ENCODE measurements at regions of chr2 and their contacts with region 1.

Region 1: DNA sequence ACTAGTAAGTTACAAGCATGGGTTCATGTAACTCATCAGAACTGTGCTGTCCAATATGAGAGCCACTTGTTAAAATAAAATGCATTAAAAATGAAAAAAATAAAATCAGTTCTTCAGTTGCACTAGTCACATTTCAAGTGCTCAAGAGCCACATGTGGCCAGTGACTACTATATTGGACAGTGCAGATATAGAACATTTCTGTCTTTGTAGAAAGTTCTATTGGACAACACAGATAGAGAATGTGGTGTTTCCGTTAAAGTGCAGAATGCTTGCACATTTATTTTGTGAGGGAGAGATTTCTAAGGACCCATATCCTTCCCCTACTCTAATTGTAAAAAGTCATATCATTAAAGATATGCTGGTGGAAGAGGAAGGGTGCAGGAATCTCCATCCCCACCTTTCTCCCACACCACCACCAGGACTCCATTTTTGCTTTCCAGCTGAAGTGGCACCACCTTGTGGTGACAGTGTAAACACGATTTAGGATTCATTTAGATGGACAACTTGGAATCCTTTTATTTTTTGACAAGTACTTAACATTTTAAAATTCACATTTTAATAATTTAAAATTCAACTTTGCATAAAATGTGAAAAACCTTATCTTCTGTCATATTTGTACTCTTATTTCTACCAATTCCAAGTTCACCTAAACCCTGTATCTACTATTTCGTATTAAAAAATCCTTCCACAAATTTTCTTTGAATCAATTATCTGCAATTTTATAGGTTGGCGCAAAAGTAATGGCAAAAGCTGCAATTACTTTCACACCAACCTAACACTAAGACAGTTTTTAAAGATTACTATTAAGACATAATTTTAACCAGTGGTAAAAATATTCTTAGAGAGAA is 9.4 kb upstream of the CD302 start:
- DNase-seq: peak in 1 of 6 donors; percentile 45
- ATAC-seq: peak in 3 of 4 donors; percentile 76 to 85 (median 84)
- H3K4me3 ChIP-seq: no peak overlapping the region
- H3K27ac ChIP-seq: no peak overlapping the region
- H3K4me1 ChIP-seq: peaks cover 0 to 7% (median 0%) of the 10 kb centered on the region in 3 donors
- H3K27me3 ChIP-seq: no peaks in the 10 kb centered on the region
- CTCF ChIP-seq: peak; percentile 38 to 67 (median 60)

Region 2: DNA sequence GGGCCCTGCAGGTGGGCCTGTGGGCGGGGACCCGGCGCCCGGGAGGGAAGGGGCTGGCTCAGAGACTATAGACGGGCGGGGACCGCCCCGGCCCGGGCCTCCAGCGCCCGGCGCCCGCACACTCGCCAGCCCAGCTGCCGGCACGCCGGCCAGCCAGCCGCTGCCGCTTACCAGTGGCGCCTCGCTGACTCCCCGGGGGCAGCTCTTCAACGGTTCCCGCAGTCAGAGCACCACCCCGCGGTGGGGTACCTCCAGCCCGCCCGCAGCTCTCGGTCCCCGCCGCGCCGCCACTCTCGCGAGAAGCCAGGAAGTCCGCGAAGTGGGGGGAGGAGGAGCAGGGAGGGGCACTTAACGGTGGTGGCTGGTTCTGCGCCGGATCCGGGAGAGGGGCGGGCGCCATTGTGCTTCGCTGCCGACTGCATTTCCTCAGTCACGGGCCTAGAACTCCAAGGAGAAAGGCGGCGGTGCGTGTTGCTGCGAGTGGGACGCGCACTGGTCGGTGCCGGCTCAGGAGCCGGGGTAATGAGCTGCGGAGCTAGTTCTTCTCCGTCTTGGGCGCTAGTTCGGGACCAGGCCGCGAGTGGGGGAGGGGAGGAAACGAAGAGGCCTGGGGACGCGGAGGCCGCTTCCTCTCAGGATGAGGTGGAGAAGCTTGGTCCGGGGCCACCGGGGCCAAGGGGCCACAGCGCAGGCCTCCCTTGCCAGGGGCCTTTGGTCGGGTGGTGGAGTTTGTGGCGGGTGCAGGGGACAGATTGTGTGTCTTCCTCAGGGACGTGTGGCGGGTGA is 95.1 kb before region 1 on chr2 and contains the start of gene MARCHF7:
- intact Hi-C with region 1: loop called in 1 of 3 experiments (anchors 10 kb)
- DNase-seq: peak; percentile 96 to 99 (median 98)
- ATAC-seq: peak; percentile 95 to 98 (median 98)
- H3K4me3 ChIP-seq: peak within 1 kb of the TSS; percentile 93 to 100 (median 98)
- H3K27ac ChIP-seq: peak within 1 kb of the TSS; percentile 95 to 99 (median 97)
- H3K4me1 ChIP-seq: peaks cover 10 to 22% (median 10%) of the 10 kb centered on the region in 3 donors
- H3K27me3 ChIP-seq: no peaks in the 10 kb centered on the region
- CTCF ChIP-seq: peak; percentile 19 to 28 (median 22)
- total RNA-seq, gene MARCHF7: 17.9 to 31.9 (median 22.0) TPM

Region 3: GRCh38 chr2:160054984-160055725 is 247.7 kb after region 1 on chr2:
- intact Hi-C with region 1: no loop called
- DNase-seq: no peak
- ATAC-seq: no peak
- H3K4me3 ChIP-seq: no peak overlapping the region
- H3K27ac ChIP-seq: no peak overlapping the region
- H3K4me1 ChIP-seq: no peaks in the 10 kb centered on the region
- H3K27me3 ChIP-seq: no peaks in the 10 kb centered on the region
- CTCF ChIP-seq: no peak

Region 4: GRCh38 chr2:160087854-160088745 is 280.7 kb after region 1 on chr2:
- intact Hi-C with region 1: no loop called
- DNase-seq: no peak
- ATAC-seq: peak in 1 of 4 donors; percentile 31
- H3K4me3 ChIP-seq: no peak overlapping the region
- H3K27ac ChIP-seq: no peak overlapping the region
- H3K4me1 ChIP-seq: no peaks in the 10 kb centered on the region
- H3K27me3 ChIP-seq: no peaks in the 10 kb centered on the region
- CTCF ChIP-seq: no peak

Measured in pancreas (tissue), 10 donors.